ENCODE measurements at regions of chr6 and their contacts with region 1.

Region 1: DNA sequence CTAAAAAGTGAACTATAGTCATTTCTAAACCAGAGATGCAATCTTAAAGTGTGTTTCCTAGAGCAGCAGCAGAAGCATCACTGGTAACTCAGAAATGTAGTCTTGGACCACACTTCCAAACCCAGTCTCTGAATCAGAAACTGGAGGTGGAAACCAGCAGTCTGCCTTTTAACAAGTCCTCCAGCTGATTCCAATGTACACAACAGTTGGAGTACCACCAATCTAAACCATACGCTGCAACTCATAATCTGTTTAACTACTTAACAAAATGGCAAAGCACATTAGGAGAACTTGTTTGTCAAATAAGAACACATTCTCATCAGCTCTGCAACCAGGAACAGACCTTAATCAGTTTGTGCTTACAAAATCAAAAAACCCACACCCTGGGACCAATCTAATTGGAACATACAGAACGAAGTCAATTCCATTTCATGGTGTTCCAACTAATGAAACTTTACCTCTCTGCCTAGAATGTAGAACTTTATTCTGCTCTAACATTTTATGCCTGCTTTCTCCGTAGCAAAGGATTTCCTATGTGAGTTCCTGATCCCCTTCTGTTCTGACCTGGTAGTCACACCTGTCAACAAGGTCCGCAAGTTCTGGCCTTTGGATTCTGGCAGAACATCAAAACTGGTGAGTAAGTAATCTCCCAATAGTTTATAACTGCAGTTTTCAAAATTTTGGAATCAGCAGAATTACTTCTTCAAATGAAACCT is 390.4 kb downstream of the HTR1B start:
- DNase-seq: no peak
- ATAC-seq: no peak

Region 2: DNA sequence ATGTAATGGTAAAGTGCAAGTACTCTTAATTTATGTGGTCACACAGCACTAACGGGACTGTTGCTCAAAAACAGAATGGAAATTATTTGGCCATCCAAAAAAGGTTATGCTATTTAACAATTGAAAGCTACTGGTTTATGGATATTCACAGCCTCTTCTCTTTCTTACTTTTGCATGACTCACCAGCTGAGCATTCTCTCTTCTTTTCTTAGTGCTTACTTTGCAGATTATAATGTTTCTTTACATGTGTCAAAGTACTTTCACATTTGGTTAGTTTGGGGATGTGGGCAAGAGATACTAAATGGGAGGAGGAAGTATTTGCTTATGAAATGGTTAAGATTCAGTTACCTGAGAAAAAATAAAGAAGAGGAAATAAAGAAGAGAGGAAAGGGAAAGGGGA is 220.1 kb before region 1 on chr6:
- intact Hi-C with region 1: no loop called
- DNase-seq: no peak
- ATAC-seq: no peak

Region 3: GRCh38 chr6:77097940-77098339 is 25.1 kb after region 1 on chr6:
- intact Hi-C with region 1: loop called (anchors 1 kb)
- DNase-seq: no peak
- ATAC-seq: no peak

Measured in sciatic nerve (tissue), 2 donors.